CD8-positive, alpha-beta T cell (primary cell): ENCODE measurements at regions of chr11 and their contacts with region 1.

Region 1: DNA sequence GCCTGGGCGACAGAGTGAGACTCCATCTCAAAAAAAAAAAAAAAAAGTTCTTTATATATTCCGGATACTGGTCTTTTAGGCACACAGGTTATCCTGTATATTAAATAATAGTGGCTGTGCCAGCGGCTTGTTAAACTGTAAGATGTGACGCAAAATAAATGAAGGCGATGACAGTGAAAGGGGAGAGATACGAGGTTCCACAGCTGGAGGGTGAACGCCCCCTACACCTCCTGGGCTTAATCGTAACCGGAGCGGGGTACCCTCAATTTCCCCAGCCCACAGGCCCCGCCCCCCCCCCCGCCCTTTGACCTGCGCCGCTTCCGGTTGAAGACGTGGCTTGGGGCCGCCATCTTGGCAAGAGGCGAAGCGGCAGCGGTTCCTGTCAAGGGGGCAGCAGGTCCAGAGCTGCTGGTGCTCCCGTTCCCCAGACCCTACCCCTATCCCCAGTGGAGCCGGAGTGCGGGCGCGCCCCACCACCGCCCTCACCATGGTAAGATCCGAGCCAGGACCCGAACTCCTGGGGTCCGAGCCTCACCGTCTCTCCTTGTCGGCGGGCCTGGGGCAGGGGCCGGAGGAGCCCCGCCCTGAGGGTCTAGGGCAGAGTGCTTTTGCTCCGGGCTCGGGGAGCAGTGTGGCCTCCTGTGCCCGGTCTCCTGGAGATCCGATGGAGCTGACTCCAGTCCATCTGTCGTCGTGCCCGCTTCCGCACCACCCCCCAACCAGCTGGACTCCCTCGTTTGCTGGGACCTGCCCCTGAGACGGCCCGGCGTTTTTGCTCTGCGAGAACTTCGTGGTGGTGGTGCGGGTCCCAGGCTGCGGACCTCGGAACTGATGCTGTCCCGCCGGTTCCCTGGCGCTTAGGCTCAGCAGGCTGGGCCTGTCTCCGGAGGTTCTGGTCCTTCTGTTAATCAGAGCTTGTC is at the start of gene ARCN1:
- DNase-seq: peak; percentile 61 to 91 (median 77)
- ATAC-seq: peak; percentile 91
- H3K4me3 ChIP-seq: peak within 1 kb of the TSS; percentile 99 to 100
- H3K4me3 Mint-ChIP-seq: peak within 1 kb of the TSS; percentile 94
- H3K27ac ChIP-seq: peak within 1 kb of the TSS; percentile 96 to 99
- H3K27ac Mint-ChIP-seq: peak within 1 kb of the TSS; percentile 97
- H3K4me1 ChIP-seq: peaks cover 34% of the 10 kb centered on the region
- H3K4me1 Mint-ChIP-seq: peaks cover 49% of the 10 kb centered on the region
- H3K27me3 ChIP-seq: no peaks in the 10 kb centered on the region
- H3K27me3 Mint-ChIP-seq: no peaks in the 10 kb centered on the region
- CTCF ChIP-seq: no peak
- total RNA-seq, gene ARCN1: 77.8 to 81.2 TPM

Region 2: DNA sequence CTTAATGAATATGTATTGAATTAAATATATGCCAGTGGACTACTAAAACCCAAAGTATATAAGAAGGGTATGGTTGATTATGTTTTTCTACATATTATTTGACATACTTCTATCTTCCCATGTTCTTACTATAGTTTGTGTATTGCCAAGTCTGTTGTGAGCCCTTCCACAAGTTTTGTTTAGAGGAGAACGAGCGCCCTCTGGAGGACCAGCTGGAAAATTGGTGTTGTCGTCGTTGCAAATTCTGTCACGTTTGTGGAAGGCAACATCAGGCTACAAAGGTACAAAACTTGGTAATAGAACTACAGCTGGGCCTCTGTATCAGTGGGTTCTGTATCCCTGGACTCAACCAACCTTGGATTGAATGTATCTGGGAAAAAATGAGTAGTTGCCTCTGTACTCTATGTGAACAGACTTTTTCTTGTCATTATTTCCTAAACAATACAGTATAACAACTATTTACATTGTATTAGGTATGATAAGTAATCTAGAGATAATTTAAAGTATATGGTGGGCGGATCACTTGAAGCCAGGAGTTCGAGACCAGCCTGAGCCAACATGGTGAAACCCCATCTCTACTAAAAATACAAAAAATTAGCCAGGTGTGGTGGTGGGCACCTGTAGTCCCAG is 83.7 kb before region 1 on chr11:
- CTCF ChIA-PET with region 1: no interaction called
- POLR2A ChIA-PET with region 1: no interaction called
- intact Hi-C with region 1: loop called in 1 of 2 experiments (anchors 2 kb)
- DNase-seq: peak; percentile 66 to 88 (median 81)
- ATAC-seq: peak; percentile 77
- H3K4me3 ChIP-seq: no peak overlapping the region
- H3K4me3 Mint-ChIP-seq: no peak overlapping the region
- H3K27ac ChIP-seq: no peak overlapping the region
- H3K27ac Mint-ChIP-seq: no peak overlapping the region
- H3K4me1 ChIP-seq: no peaks in the 10 kb centered on the region
- H3K4me1 Mint-ChIP-seq: peaks cover 4% of the 10 kb centered on the region
- H3K27me3 ChIP-seq: no peaks in the 10 kb centered on the region
- H3K27me3 Mint-ChIP-seq: no peaks in the 10 kb centered on the region
- CTCF ChIP-seq: peak; percentile 93

Region 3: GRCh38 chr11:118514103-118514502 is 58.2 kb before region 1 on chr11:
- CTCF ChIA-PET with region 1: no interaction called
- POLR2A ChIA-PET with region 1: no interaction called
- intact Hi-C with region 1: no loop called
- DNase-seq: peak in 1 of 9 experiments; percentile 25
- ATAC-seq: no peak
- H3K4me3 ChIP-seq: no peak overlapping the region
- H3K4me3 Mint-ChIP-seq: no peak overlapping the region
- H3K27ac ChIP-seq: no peak overlapping the region
- H3K27ac Mint-ChIP-seq: peak overlapping the region; percentile 42
- H3K4me1 ChIP-seq: no peaks in the 10 kb centered on the region
- H3K4me1 Mint-ChIP-seq: peaks cover 10% of the 10 kb centered on the region
- H3K27me3 ChIP-seq: no peaks in the 10 kb centered on the region
- H3K27me3 Mint-ChIP-seq: no peaks in the 10 kb centered on the region
- CTCF ChIP-seq: no peak

Region 4: GRCh38 chr11:118530408-118531339 is 41.6 kb before region 1 on chr11 and contains the start of gene TMEM25:
- CTCF ChIA-PET with region 1: no interaction called
- POLR2A ChIA-PET with region 1: interaction called, 3 read pairs
- intact Hi-C with region 1: loop called in 1 of 2 experiments (anchors 2 kb)
- DNase-seq: peak; percentile 22 to 82 (median 73)
- ATAC-seq: peak; percentile 85
- H3K4me3 ChIP-seq: peak within 1 kb of the TSS; percentile 58 to 99
- H3K4me3 Mint-ChIP-seq: peak within 1 kb of the TSS; percentile 98
- H3K27ac ChIP-seq: peak within 1 kb of the TSS; percentile 18 to 67
- H3K27ac Mint-ChIP-seq: peak within 1 kb of the TSS; percentile 90
- H3K4me1 ChIP-seq: peaks cover 24% of the 10 kb centered on the region
- H3K4me1 Mint-ChIP-seq: peaks cover 37% of the 10 kb centered on the region
- H3K27me3 ChIP-seq: no peaks in the 10 kb centered on the region
- H3K27me3 Mint-ChIP-seq: no peaks in the 10 kb centered on the region
- CTCF ChIP-seq: no peak
- total RNA-seq, gene TMEM25: 11.3 to 14.0 TPM